Activated CD4-positive, alpha-beta T cell treated with anti-CD3 and anti-CD28 coated beads for 36 hours (primary cell): ENCODE measurements at regions of chr20 and their contacts with region 1.

Region 1: DNA sequence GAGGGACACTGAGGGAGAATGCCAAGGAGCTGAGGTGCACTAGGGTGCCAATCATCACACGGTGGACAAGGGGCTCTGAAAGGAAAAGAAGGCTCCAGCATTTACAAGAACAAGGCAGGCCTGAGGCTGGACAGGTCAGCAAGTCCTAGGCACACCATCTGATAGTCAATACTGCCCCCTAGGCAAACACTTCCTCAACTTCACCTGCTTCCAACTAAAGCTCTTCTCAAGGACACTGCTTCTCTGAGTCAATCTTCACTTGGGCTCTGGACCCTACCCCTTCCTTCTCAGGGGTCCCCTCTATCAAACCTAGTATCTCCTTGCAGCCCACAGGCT is 37.7 kb upstream of the SLC4A11 start:
- DNase-seq: no peak
- ATAC-seq: no peak
- H3K4me3 Mint-ChIP-seq: no peak overlapping the region
- H3K27ac Mint-ChIP-seq: no peak overlapping the region
- H3K4me1 Mint-ChIP-seq: no peaks in the 10 kb centered on the region
- H3K27me3 Mint-ChIP-seq: no peaks in the 10 kb centered on the region

Region 2: GRCh38 chr20:3218307-3218988 is 58.2 kb before region 1 on chr20:
- CTCF ChIA-PET with region 1: interaction called, 11 read pairs
- POLR2A ChIA-PET with region 1: interaction called, 3 read pairs
- intact Hi-C with region 1: loop called (anchors 1 to 5 kb)
- DNase-seq: peak; percentile 86
- ATAC-seq: peak; percentile 86
- H3K4me3 Mint-ChIP-seq: no peak overlapping the region
- H3K27ac Mint-ChIP-seq: no peak overlapping the region
- H3K4me1 Mint-ChIP-seq: peaks cover 14% of the 10 kb centered on the region
- H3K27me3 Mint-ChIP-seq: no peaks in the 10 kb centered on the region